CD8-positive, alpha-beta T cell (primary cell): ENCODE measurements at regions of chr6 and their contacts with region 1.

Region 1: GRCh38 chr6:122049341-122049740 is 350.1 kb upstream of the HSF2 start:
- DNase-seq: no peak
- ATAC-seq: no peak
- H3K4me3 ChIP-seq: no peak overlapping the region
- H3K4me3 Mint-ChIP-seq: no peak overlapping the region
- H3K27ac ChIP-seq: no peak overlapping the region
- H3K27ac Mint-ChIP-seq: no peak overlapping the region
- H3K4me1 ChIP-seq: no peaks in the 10 kb centered on the region
- H3K4me1 Mint-ChIP-seq: no peaks in the 10 kb centered on the region
- H3K27me3 ChIP-seq: no peaks in the 10 kb centered on the region
- H3K27me3 Mint-ChIP-seq: peaks cover 6% of the 10 kb centered on the region
- CTCF ChIP-seq: no peak

Region 2: DNA sequence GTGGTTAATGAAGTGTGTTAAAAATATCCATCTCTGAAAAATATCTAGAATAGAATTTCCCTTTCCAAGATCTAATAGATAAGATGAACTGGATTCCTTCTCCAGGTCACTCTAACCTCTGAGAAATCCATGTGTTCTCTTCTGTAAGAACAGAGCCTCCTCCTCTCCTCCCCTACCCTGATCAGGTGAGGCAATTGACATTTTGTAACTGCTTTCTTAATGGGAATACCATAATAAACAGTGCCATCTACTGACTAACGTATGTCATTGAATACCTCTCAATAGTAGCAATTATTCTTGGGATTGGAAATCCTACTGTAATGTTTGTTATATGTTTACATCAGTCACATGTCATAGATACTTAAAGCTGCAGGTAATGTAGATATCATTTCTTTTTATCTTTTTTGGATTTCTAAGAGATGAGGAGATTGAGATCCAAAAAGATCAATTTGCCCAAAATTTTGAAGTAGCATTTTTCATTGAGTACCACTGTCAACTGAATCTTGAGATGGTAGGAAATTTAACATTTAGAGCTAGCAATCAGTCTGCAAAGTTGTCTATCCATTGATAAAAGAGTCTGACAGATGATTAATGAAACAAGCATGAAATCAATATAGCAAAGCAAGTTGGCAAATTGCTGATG is 15.7 kb before region 1 on chr6:
- CTCF ChIA-PET with region 1: no interaction called
- POLR2A ChIA-PET with region 1: no interaction called
- intact Hi-C with region 1: loop called in 1 of 2 experiments (anchors 1 kb)
- DNase-seq: peak in 2 of 9 experiments; percentile 23 to 52
- ATAC-seq: peak; percentile 62
- H3K4me3 ChIP-seq: no peak overlapping the region
- H3K4me3 Mint-ChIP-seq: no peak overlapping the region
- H3K27ac ChIP-seq: no peak overlapping the region
- H3K27ac Mint-ChIP-seq: no peak overlapping the region
- H3K4me1 ChIP-seq: no peaks in the 10 kb centered on the region
- H3K4me1 Mint-ChIP-seq: no peaks in the 10 kb centered on the region
- H3K27me3 ChIP-seq: no peaks in the 10 kb centered on the region
- H3K27me3 Mint-ChIP-seq: peaks cover 3% of the 10 kb centered on the region
- CTCF ChIP-seq: peak; percentile 59